Activated CD4-positive, alpha-beta T cell treated with anti-CD3 and anti-CD28 coated beads, Interleukin-2, amount 10 ng/mL, durations not matched to agents 24 days and 14 days (primary cell): ENCODE measurements at regions of chr12 and their contacts with region 1.

Region 1: GRCh38 chr12:28190321-28191050 is at the start of gene CCDC91:
- DNase-seq: peak; percentile 95
- H3K4me3 Mint-ChIP-seq: peak within 1 kb of the TSS; percentile 95
- H3K27ac Mint-ChIP-seq: peak within 1 kb of the TSS; percentile 99
- H3K4me1 Mint-ChIP-seq: peaks cover 32% of the 10 kb centered on the region
- H3K27me3 Mint-ChIP-seq: no peaks in the 10 kb centered on the region
- total RNA-seq, gene CCDC91: 12.0 and 15.4 TPM in 2 replicates

Region 2: DNA sequence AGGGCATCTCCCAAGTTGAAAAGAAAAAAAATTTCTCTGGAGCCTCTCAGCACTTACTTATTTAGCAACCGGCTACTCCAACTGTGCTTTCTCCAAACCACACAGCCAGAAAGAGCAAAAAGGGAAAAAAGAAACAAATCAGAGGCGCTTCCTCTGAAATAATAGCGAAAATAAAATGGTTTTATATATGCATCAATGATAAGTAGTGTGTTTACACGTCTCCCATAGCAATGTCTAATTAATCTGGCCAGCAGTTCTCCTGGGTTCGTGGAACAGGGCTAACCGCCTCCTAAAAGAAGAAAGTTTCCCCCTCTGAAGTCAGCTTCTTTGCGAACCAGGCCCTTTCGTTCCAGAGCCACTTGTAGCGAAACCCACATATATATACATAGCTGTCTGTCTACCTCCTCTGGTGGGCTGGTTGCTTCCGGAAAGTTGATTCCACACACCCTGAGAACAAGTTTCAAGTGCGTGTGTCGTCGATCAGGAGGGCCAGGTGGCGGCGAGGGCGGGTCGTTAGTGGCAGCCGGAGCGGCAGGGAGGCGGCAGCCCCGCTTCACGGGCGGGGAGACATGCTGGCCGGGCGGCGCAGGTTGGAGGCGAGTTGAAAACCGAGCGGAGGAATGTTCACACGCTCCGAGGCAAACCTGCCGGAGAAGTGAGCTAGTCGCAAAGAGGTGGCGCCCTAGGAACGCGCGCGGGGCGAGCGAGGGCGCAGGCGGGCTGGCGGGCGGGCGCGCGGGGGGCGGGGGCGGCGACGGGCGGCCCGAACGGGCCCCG is 220.7 kb before region 1 on chr12:
- intact Hi-C with region 1: loop called (anchors 10 kb)
- DNase-seq: peak; percentile 75
- H3K4me3 Mint-ChIP-seq: peak overlapping the region; percentile 82
- H3K27ac Mint-ChIP-seq: peak overlapping the region; percentile 10
- H3K4me1 Mint-ChIP-seq: peaks cover 15% of the 10 kb centered on the region
- H3K27me3 Mint-ChIP-seq: peaks cover 86% of the 10 kb centered on the region

Region 3: DNA sequence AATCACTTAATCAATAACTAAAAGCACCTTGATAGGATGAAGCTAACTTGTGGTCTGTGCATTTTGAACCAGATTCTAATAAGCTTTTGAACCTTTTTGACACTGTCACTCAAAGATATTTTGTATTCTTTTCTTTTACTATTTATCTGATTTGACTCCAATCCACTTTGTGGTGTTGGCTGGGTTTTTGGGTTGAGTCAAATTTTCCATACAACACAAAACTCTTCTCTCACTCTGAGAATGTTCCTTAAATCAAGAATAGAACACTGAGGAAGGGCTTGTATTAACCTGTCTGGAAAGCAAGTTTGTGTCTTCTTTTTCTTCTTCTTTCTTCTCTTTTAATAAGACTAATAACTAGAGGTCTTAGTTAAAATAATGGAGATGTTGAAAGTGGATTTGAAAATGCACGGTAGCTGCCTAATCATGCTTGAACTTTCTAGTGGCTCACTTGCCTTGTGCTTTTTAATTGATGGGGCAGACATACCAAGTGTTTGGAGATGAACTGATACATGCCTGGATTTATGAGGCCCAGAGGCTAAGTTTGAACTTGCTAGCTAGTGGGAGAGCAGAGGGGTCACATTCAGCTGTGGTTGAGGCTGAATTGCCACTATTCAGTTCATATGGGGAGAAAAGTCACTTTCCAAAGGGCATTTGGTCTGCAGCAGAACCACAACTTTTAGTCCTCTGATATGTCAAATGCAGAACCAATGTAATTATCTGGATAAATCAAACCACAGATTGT is 124.4 kb before region 1 on chr12:
- intact Hi-C with region 1: loop called (anchors 10 kb)
- DNase-seq: no peak
- H3K4me3 Mint-ChIP-seq: no peak overlapping the region
- H3K27ac Mint-ChIP-seq: no peak overlapping the region
- H3K4me1 Mint-ChIP-seq: peaks cover 7% of the 10 kb centered on the region
- H3K27me3 Mint-ChIP-seq: no peaks in the 10 kb centered on the region

Region 4: DNA sequence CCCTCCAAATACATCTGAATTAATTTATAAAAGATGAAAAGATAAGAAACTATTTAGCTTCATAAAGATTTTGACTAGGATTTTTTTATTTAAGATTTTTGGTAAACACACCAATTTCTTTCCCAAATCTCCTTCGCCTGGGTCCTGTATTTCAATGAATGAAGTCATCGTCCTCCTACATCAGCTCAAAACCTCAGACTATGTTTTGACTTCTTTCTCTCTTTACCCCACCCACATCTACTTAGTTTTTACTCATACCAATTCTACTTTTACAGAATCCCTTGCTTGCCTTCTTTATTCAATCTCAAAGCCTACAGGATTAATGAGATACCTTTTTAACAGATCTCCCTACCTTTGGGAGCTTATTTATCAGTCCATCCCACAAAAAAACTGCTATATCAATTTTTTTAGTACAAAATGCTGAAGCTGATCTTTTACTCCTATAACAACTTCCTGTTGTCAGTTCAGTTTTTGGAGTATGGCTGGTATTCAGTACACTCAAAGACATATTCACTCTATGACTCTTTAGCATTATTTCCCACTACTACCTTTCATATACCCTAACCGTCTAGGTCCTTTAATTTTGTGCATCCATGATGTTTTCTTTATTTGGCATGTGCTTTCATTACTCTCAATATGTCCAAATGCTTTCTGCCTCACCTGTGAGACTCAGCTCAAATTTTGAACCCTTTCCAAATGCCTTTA is 19.0 kb before region 1 on chr12:
- intact Hi-C with region 1: loop called (anchors 1 kb)
- DNase-seq: no peak
- H3K4me3 Mint-ChIP-seq: no peak overlapping the region
- H3K27ac Mint-ChIP-seq: no peak overlapping the region
- H3K4me1 Mint-ChIP-seq: peaks cover 7% of the 10 kb centered on the region
- H3K27me3 Mint-ChIP-seq: no peaks in the 10 kb centered on the region

Region 5: DNA sequence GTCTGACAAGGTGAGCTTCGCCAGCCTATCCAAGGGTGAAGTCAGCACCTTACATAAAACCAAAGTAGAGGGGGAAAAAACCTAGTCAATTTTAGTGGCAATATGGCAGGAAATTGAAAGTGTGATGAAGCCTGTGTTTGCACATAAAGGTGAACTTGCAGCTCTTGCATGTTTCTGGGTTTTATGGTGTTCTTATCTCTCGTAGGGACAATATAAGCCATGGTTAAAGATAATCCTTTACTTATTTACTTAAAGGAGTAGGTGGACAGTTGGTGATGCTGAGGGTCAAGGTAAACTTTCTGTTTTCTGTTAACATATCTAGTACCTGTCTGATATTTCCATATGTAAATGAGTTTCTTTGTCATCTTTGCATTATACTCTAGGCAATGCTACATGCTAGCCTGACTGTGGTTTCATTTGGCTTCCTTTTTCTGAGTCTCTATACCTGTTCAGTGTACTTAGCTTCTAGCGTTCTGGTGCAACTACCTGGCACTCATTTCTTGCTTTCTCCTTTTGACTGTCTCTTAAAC is 32.6 kb after region 1 on chr12:
- intact Hi-C with region 1: loop called (anchors 1 kb)
- DNase-seq: peak; percentile 60
- H3K4me3 Mint-ChIP-seq: peak overlapping the region; percentile 44
- H3K27ac Mint-ChIP-seq: peak overlapping the region; percentile 31
- H3K4me1 Mint-ChIP-seq: peaks cover 29% of the 10 kb centered on the region
- H3K27me3 Mint-ChIP-seq: peaks cover 9% of the 10 kb centered on the region

Region 6: DNA sequence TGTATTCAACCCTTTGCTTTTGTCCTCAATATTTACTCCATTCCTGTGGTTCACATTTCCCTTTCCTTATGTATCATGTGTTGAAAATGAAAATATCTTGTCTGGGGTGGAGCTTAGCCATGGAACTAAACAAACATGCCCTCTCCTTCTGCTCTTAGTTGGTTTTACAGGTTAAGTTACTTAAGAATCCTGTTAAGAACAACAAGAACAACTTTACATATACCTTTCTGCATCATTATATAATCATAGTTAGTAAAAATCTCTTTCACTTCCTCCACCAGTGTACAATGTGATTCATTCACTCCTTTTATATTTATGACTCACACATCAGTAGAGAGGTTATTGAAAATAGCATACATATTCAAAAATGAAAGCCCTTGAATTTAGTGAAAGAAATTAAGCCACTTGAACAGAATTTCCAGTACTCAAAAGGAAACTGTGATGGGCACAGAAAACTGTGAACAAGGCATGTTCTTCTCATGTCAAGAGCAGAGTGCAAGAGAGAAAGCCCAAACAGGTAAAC is 307.5 kb after region 1 on chr12:
- intact Hi-C with region 1: loop called (anchors 10 kb)
- DNase-seq: no peak
- H3K4me3 Mint-ChIP-seq: no peak overlapping the region
- H3K27ac Mint-ChIP-seq: peak overlapping the region; percentile 7
- H3K4me1 Mint-ChIP-seq: peaks cover 9% of the 10 kb centered on the region
- H3K27me3 Mint-ChIP-seq: no peaks in the 10 kb centered on the region